Dendritic cell treated with granulocyte-macrophage colony-stimulating factor and Interleukin-4, amounts not matched to agents 40 ng/mL and 50 ng/mL, for 4 days (primary cell): ENCODE measurements at regions of chr7 and their contacts with region 1.

Region 1: DNA sequence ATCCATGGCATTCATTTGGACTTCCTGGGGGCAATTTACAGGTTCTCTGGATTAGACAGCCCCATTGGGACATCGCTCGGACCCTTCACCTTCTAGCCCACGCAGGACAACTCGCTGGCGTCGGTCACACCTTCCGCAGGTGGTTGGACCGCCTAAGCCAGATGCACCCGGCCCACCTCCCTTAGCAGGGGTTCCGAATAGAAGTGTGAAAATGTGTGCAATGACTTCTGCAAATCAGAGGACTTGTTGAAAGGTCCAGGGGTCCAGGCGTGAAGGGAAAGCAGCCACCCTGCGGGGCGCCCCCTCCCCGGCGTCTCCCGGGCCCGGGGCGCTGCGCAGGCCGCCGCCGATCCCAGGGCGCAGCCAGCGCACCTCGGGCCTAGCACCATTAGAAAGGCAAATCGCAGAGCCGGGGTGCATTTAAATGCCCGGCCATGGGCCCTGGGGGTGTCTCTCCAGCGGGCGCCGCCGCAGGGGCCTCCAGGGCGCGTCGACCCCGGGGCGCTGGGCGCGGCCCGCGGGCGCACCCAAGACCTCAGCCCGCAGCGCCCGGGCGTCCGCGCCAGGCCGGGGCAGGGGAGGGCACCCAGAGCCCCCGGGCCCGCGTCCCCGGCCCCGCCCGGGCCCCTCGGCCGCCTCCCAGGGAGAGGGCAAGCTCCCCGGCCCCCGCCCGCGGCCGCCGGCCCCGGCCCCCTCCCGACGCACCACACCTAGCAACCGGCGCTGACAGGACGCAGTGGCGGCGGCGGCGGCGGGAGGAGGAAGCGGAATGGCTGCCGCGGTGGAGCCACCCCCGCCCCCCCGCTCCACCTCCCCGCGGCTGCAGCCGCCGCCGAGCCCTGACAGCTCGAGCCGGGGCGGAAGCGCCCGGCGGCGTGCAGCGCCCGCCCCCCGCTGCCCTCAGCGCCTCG is 1.2 kb downstream of the JAZF1 start:
- H3K4me3 Mint-ChIP-seq: peak overlapping the region; percentile 71
- H3K27ac Mint-ChIP-seq: peak overlapping the region; percentile 74
- H3K4me1 Mint-ChIP-seq: peaks cover 42% of the 10 kb centered on the region
- H3K27me3 Mint-ChIP-seq: no peaks in the 10 kb centered on the region

Region 2: GRCh38 chr7:28144266-28144665 is 35.1 kb before region 1 on chr7:
- intact Hi-C with region 1: loop called (anchors 5 kb)
- H3K4me3 Mint-ChIP-seq: no peak overlapping the region
- H3K27ac Mint-ChIP-seq: no peak overlapping the region
- H3K4me1 Mint-ChIP-seq: peaks cover 5% of the 10 kb centered on the region
- H3K27me3 Mint-ChIP-seq: no peaks in the 10 kb centered on the region

Region 3: GRCh38 chr7:28155019-28155660 is 24.2 kb before region 1 on chr7:
- intact Hi-C with region 1: loop called (anchors 2 kb)
- H3K4me3 Mint-ChIP-seq: peak overlapping the region; percentile 34
- H3K27ac Mint-ChIP-seq: peak overlapping the region; percentile 88
- H3K4me1 Mint-ChIP-seq: peaks cover 68% of the 10 kb centered on the region
- H3K27me3 Mint-ChIP-seq: no peaks in the 10 kb centered on the region

Region 4: DNA sequence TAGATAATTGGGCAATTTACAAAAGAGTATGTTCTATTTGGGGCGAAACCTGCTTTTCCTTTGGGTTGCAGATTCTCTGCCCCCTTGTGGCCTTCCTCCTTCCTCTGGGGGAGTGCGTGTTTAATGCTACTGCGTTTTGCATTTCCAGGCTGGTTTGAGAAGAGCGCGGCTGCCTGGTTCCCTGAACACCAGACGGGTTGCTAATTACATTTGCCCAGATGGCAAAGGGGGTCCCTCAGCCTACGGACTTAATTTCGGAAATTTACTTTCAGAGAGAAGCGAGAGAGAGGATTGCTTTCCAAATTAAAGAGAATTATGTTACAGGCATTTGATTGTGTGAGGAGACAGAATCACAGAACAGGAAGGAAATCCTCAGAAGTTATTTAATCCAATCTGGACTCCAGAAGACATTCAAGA is 93.1 kb after region 1 on chr7:
- intact Hi-C with region 1: loop called (anchors 10 kb)
- H3K4me3 Mint-ChIP-seq: peak overlapping the region; percentile 70
- H3K27ac Mint-ChIP-seq: peak overlapping the region; percentile 40
- H3K4me1 Mint-ChIP-seq: peaks cover 23% of the 10 kb centered on the region
- H3K27me3 Mint-ChIP-seq: peaks cover 7% of the 10 kb centered on the region